Naive thymus-derived CD4-positive, alpha-beta T cell (primary cell): ENCODE measurements at regions of chr1 and their contacts with region 1.

Region 1: DNA sequence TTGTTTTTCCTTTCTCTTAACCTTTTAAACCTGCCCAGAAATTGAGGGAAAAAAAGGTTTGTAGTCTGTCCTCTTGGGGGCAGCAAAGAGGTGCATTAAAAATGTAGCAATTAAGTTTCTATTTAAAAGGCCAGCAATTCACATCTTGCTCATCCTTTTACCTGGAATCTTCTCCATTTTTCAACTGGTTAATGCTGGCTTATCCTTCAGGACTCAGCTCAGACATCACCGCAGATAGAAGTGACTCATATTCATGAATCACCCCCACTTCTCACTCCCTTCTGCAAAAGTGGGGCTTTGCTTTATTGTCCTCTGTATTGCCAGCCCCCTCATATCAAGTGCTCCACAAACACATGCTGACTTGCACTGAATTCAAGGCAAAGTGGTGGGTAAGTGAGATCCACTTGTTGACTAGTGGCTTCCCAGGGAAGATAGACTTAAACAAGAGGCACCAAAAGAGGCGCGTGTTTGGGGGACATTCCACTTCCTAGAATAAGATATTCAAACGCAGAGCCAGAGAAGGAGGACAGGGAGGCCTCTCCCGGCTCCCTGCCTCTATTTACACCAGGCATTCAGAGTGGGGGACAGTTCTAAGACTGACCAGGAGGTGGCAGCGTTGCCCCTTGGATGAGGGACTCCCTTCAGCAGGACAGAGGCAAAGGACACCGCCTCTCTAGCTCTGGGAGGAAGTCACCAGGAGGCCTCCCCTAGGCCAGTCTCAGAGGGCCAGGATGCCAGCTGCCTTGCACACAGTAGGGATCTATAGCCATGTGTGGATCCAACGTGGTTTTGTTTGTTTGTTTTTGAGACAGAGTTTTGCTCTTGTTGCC is 23.2 kb upstream of the ZNF648 start:
- DNase-seq: peak; percentile 60 to 79 (median 75)
- ATAC-seq: peak; percentile 90
- H3K4me3 ChIP-seq: no peak overlapping the region
- H3K4me3 Mint-ChIP-seq: peak overlapping the region in 8 of 10 donors; percentile 8 to 45 (median 33)
- H3K27ac ChIP-seq: no peak overlapping the region
- H3K27ac Mint-ChIP-seq: peak overlapping the region; percentile 49 to 88 (median 83)
- H3K4me1 ChIP-seq: peaks cover 15 to 47% of the 10 kb centered on the region in 2 donors
- H3K4me1 Mint-ChIP-seq: peaks cover 27 to 54% (median 52%) of the 10 kb centered on the region in 7 donors
- H3K27me3 ChIP-seq: no peaks in the 10 kb centered on the region
- H3K27me3 Mint-ChIP-seq: no peaks in the 10 kb centered on the region

Region 2: GRCh38 chr1:181479137-181479745 is 605.5 kb before region 1 on chr1:
- CTCF ChIA-PET with region 1: interaction called, 22 read pairs
- POLR2A ChIA-PET with region 1: no interaction called
- intact Hi-C with region 1: loop called in 1 of 2 experiments (anchors 1 kb)
- DNase-seq: peak in 5 of 9 donors; percentile 25 to 40 (median 26)
- ATAC-seq: peak; percentile 64
- H3K4me3 ChIP-seq: no peak overlapping the region
- H3K4me3 Mint-ChIP-seq: no peak overlapping the region
- H3K27ac ChIP-seq: no peak overlapping the region
- H3K27ac Mint-ChIP-seq: no peak overlapping the region
- H3K4me1 ChIP-seq: no peaks in the 10 kb centered on the region
- H3K4me1 Mint-ChIP-seq: peaks cover 9 to 16% (median 12%) of the 10 kb centered on the region in 7 donors
- H3K27me3 ChIP-seq: peaks cover 0 to 5% of the 10 kb centered on the region in 2 donors
- H3K27me3 Mint-ChIP-seq: peaks cover 34 to 58% (median 46%) of the 10 kb centered on the region in 5 donors

Region 3: DNA sequence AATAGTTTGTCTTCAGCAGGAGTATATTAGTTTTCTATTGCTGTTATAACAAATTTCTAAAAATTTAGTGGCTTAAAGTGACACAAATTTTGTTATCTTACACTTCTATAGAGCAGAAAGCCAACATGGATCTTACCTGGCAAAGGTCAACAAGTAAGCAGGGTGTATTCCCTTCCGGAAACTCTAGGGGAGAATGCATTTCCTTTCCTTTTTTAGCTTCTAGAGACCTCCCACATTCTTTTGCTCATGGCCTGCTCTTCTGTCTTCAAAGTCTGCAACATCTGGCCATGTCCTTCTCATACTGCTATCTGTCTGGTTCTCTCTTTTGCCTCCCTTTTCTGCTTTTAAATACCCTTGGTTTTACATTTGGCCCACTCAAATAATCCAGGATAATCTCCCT is 265.8 kb before region 1 on chr1:
- CTCF ChIA-PET with region 1: no interaction called
- POLR2A ChIA-PET with region 1: no interaction called
- intact Hi-C with region 1: no loop called
- DNase-seq: no peak
- ATAC-seq: no peak
- H3K4me3 ChIP-seq: no peak overlapping the region
- H3K4me3 Mint-ChIP-seq: no peak overlapping the region
- H3K27ac ChIP-seq: no peak overlapping the region
- H3K27ac Mint-ChIP-seq: no peak overlapping the region
- H3K4me1 ChIP-seq: no peaks in the 10 kb centered on the region
- H3K4me1 Mint-ChIP-seq: no peaks in the 10 kb centered on the region
- H3K27me3 ChIP-seq: no peaks in the 10 kb centered on the region
- H3K27me3 Mint-ChIP-seq: peaks cover 8 to 34% (median 14%) of the 10 kb centered on the region in 5 donors

Region 4: GRCh38 chr1:181953596-181953995 is 131.1 kb before region 1 on chr1:
- CTCF ChIA-PET with region 1: no interaction called
- POLR2A ChIA-PET with region 1: no interaction called
- intact Hi-C with region 1: no loop called
- DNase-seq: no peak
- ATAC-seq: no peak
- H3K4me3 ChIP-seq: no peak overlapping the region
- H3K4me3 Mint-ChIP-seq: no peak overlapping the region
- H3K27ac ChIP-seq: no peak overlapping the region
- H3K27ac Mint-ChIP-seq: no peak overlapping the region
- H3K4me1 ChIP-seq: no peaks in the 10 kb centered on the region
- H3K4me1 Mint-ChIP-seq: peaks cover 0 to 7% (median 0%) of the 10 kb centered on the region in 7 donors
- H3K27me3 ChIP-seq: no peaks in the 10 kb centered on the region
- H3K27me3 Mint-ChIP-seq: peaks cover 0 to 14% (median 4%) of the 10 kb centered on the region in 5 donors

Region 5: DNA sequence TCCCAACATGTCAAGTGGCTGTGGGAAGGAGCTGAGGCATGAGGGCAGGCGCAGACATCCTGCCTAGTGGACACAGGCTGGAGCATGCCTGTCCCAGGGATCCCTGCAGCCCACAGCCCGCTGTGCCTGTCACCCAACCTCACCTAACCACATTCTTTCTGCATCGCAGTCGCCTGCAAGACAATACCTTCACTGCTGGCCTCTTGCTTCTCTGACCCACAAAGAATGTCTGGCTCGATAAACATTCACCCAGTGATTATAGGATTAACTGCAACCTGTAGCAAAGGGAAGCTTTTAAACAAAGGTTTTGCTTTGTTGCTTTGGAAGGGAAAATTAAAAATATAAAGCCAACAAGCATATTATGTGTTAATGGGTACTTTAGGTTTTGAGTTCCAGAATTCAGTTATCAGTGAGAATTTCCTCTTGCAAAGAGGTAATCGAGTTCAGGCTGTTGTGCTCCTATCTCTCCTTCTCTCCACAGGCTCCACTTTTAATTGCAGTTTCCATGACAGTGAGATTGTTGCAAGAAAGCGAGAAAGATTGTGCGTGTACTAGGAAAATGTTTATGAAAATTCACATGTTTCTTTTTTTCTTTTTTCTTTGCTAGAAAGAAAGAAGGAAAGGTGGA is 16.8 kb after region 1 on chr1:
- CTCF ChIA-PET with region 1: no interaction called
- POLR2A ChIA-PET with region 1: no interaction called
- intact Hi-C with region 1: no loop called
- DNase-seq: no peak
- ATAC-seq: no peak
- H3K4me3 ChIP-seq: no peak overlapping the region
- H3K4me3 Mint-ChIP-seq: no peak overlapping the region
- H3K27ac ChIP-seq: no peak overlapping the region
- H3K27ac Mint-ChIP-seq: no peak overlapping the region
- H3K4me1 ChIP-seq: no peaks in the 10 kb centered on the region
- H3K4me1 Mint-ChIP-seq: peaks cover 0 to 3% (median 0%) of the 10 kb centered on the region in 7 donors
- H3K27me3 ChIP-seq: no peaks in the 10 kb centered on the region
- H3K27me3 Mint-ChIP-seq: peaks cover 0 to 66% (median 0%) of the 10 kb centered on the region in 5 donors

Region 6: GRCh38 chr1:182143154-182143657 is 58.5 kb after region 1 on chr1:
- CTCF ChIA-PET with region 1: interaction called, 90 read pairs
- POLR2A ChIA-PET with region 1: interaction called, 3 read pairs
- intact Hi-C with region 1: loop called (anchors 1 kb)
- DNase-seq: peak; percentile 62 to 90 (median 80)
- ATAC-seq: peak; percentile 75
- H3K4me3 ChIP-seq: no peak overlapping the region
- H3K4me3 Mint-ChIP-seq: no peak overlapping the region
- H3K27ac ChIP-seq: no peak overlapping the region
- H3K27ac Mint-ChIP-seq: peak overlapping the region in 3 of 9 donors; percentile 5 to 8 (median 5)
- H3K4me1 ChIP-seq: no peaks in the 10 kb centered on the region
- H3K4me1 Mint-ChIP-seq: peaks cover 6 to 37% (median 11%) of the 10 kb centered on the region in 7 donors
- H3K27me3 ChIP-seq: no peaks in the 10 kb centered on the region
- H3K27me3 Mint-ChIP-seq: peaks cover 0 to 12% (median 5%) of the 10 kb centered on the region in 5 donors

Region 7: DNA sequence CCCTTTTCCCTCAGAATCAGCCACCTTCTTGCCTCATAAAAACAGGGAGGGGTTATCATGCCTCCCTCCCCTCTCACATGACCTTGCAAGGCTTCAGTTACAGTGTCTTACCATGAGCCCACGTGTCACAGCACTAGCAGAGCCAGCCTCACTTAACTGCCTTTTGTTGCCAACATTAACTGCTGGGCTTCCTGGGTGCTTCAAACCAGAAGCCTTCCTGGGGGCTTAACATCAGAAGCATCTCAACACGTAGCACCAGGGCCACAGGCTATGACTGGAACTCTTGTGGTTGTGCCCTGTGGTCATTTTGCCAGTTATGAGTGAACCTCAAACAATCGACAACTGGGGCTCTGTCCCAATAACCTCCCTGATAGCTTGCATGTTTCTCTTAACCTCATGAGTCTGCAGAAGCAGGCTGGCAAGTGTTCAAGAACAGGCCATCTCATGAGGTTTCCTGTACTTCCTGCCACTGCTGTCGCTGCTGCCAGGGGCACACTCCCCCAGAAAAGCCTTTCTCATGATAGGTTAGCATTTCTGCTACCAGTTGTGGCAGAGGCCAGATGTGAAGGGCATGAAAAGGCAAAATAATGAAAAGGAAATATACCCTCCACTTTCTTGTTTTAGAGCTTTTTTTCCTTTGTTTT is 174.6 kb after region 1 on chr1:
- CTCF ChIA-PET with region 1: interaction called, 3 read pairs
- POLR2A ChIA-PET with region 1: no interaction called
- intact Hi-C with region 1: loop called (anchors 2 to 5 kb)
- DNase-seq: peak; percentile 21 to 79 (median 65)
- ATAC-seq: peak; percentile 90
- H3K4me3 ChIP-seq: peak overlapping the region; percentile 2
- H3K4me3 Mint-ChIP-seq: peak overlapping the region; percentile 28 to 82 (median 75)
- H3K27ac ChIP-seq: peak overlapping the region; percentile 72
- H3K27ac Mint-ChIP-seq: peak overlapping the region; percentile 83 to 97 (median 91)
- H3K4me1 ChIP-seq: peaks cover 11 to 20% of the 10 kb centered on the region in 2 donors
- H3K4me1 Mint-ChIP-seq: peaks cover 23 to 50% (median 43%) of the 10 kb centered on the region in 7 donors
- H3K27me3 ChIP-seq: no peaks in the 10 kb centered on the region
- H3K27me3 Mint-ChIP-seq: no peaks in the 10 kb centered on the region

Region 8: DNA sequence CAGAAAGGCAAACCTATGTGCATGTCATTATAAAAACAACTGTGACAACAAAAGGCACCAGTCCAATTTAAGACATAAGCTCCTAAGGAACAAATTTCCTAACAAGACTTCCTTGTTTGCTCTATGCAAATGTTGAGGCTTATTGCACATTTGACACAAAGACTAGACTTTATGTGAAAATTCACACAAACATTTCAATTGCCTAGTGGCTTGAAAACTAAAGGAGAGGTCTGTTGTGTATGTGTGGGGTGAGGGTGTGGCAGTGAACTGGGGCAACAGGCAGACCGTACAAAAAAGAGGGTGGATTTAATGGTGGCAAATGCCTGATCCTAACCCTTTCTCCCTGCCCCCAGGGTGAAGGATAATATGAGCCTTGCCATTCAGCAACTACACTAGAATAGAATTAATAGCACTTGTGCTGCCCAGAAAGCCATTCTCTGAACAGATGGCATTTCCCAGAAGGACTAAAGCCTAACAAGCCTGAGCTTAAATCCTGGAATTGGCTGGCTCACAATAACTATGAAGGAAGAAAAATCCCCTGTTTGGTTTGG is 233.0 kb after region 1 on chr1:
- CTCF ChIA-PET with region 1: no interaction called
- POLR2A ChIA-PET with region 1: no interaction called
- intact Hi-C with region 1: no loop called
- DNase-seq: no peak
- ATAC-seq: no peak
- H3K4me3 ChIP-seq: no peak overlapping the region
- H3K4me3 Mint-ChIP-seq: no peak overlapping the region
- H3K27ac ChIP-seq: no peak overlapping the region
- H3K27ac Mint-ChIP-seq: no peak overlapping the region
- H3K4me1 ChIP-seq: no peaks in the 10 kb centered on the region
- H3K4me1 Mint-ChIP-seq: peaks cover 0 to 1% (median 0%) of the 10 kb centered on the region in 7 donors
- H3K27me3 ChIP-seq: no peaks in the 10 kb centered on the region
- H3K27me3 Mint-ChIP-seq: peaks cover 0 to 6% (median 0%) of the 10 kb centered on the region in 5 donors

Region 9: DNA sequence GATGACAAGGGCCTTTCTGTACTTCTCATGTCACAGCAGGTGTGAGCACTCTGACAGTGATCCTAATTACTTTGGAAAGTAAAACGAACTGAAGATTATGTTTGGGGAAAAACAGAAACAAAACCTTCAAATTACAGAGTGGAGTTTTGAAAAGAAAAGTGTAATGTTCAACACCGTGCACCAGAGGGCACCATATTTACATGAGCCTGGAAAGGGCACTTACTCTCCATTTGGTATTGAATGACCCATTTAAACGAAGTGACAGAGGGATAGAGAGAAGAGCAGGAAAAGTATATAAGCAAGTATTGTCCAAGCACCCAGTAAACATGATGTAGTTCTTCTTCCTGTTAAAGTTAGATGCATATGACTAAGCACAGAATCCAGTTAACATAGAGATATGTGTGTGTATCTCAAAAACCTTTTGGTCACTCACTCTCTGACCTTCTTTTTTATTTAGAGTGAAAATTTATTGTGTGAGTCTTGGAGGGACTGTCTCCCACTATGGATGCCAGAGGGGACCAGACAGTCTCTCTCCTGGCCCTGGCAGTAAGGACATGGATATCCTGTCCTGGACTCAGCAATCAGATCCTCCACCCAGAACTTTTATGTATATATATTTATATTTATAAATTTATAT is 361.4 kb after region 1 on chr1:
- CTCF ChIA-PET with region 1: no interaction called
- POLR2A ChIA-PET with region 1: no interaction called
- intact Hi-C with region 1: loop called in 1 of 2 experiments (anchors 1 kb)
- DNase-seq: peak in 3 of 9 donors; percentile 12 to 21 (median 13)
- ATAC-seq: peak; percentile 77
- H3K4me3 ChIP-seq: no peak overlapping the region
- H3K4me3 Mint-ChIP-seq: no peak overlapping the region
- H3K27ac ChIP-seq: no peak overlapping the region
- H3K27ac Mint-ChIP-seq: no peak overlapping the region
- H3K4me1 ChIP-seq: no peaks in the 10 kb centered on the region
- H3K4me1 Mint-ChIP-seq: peaks cover 0 to 6% (median 5%) of the 10 kb centered on the region in 7 donors
- H3K27me3 ChIP-seq: no peaks in the 10 kb centered on the region
- H3K27me3 Mint-ChIP-seq: peaks cover 0 to 6% (median 0%) of the 10 kb centered on the region in 5 donors

Region 10: GRCh38 chr1:182781841-182782586 is 697.3 kb after region 1 on chr1:
- CTCF ChIA-PET with region 1: interaction called, 5 read pairs
- POLR2A ChIA-PET with region 1: no interaction called
- intact Hi-C with region 1: loop called in 1 of 2 experiments (anchors 1 kb)
- DNase-seq: peak; percentile 33 to 72 (median 54)
- ATAC-seq: peak; percentile 84
- H3K4me3 ChIP-seq: no peak overlapping the region
- H3K4me3 Mint-ChIP-seq: no peak overlapping the region
- H3K27ac ChIP-seq: no peak overlapping the region
- H3K27ac Mint-ChIP-seq: peak overlapping the region in 3 of 9 donors; percentile 33 to 55 (median 39)
- H3K4me1 ChIP-seq: no peaks in the 10 kb centered on the region
- H3K4me1 Mint-ChIP-seq: peaks cover 4 to 20% (median 5%) of the 10 kb centered on the region in 7 donors
- H3K27me3 ChIP-seq: no peaks in the 10 kb centered on the region
- H3K27me3 Mint-ChIP-seq: peaks cover 0 to 12% (median 0%) of the 10 kb centered on the region in 5 donors